Prostate gland (tissue), 2 donors: ENCODE measurements at regions of chrX and their contacts with region 1.

Region 1: GRCh38 chrX:49043220-49043986 is at the start of gene TFE3:
- DNase-seq: peak; percentile 97
- H3K4me3 ChIP-seq: peak within 1 kb of the TSS; percentile 63 to 73
- H3K27ac ChIP-seq: peak within 1 kb of the TSS; percentile 95 to 97
- H3K4me1 ChIP-seq: no peaks in the 10 kb centered on the region
- H3K27me3 ChIP-seq: no peaks in the 10 kb centered on the region
- CTCF ChIP-seq: peak in 3 of 4 experiments; percentile 60 to 89 (median 82)
- POLR2A ChIP-seq: peak; percentile 77
- total RNA-seq, gene TFE3: 44.6 to 88.4 TPM

Region 2: GRCh38 chrX:48917139-48918001 is 126.0 kb before region 1 on chrX:
- intact Hi-C with region 1: loop called (anchors 10 kb)
- DNase-seq: peak; percentile 85
- H3K4me3 ChIP-seq: peak overlapping the region; percentile 53 to 57
- H3K27ac ChIP-seq: peak overlapping the region; percentile 30 to 84
- H3K4me1 ChIP-seq: no peaks in the 10 kb centered on the region
- H3K27me3 ChIP-seq: no peaks in the 10 kb centered on the region
- CTCF ChIP-seq: peak; percentile 78 to 97 (median 96)
- POLR2A ChIP-seq: no peak

Region 3: GRCh38 chrX:48957827-48958634 is 85.4 kb before region 1 on chrX:
- intact Hi-C with region 1: loop called (anchors 1 kb)
- DNase-seq: peak; percentile 96
- H3K4me3 ChIP-seq: peak overlapping the region; percentile 52 to 53
- H3K27ac ChIP-seq: peak overlapping the region; percentile 93 to 95
- H3K4me1 ChIP-seq: no peaks in the 10 kb centered on the region
- H3K27me3 ChIP-seq: no peaks in the 10 kb centered on the region
- CTCF ChIP-seq: peak in 1 of 4 experiments; percentile 11
- POLR2A ChIP-seq: peak; percentile 47

Region 4: DNA sequence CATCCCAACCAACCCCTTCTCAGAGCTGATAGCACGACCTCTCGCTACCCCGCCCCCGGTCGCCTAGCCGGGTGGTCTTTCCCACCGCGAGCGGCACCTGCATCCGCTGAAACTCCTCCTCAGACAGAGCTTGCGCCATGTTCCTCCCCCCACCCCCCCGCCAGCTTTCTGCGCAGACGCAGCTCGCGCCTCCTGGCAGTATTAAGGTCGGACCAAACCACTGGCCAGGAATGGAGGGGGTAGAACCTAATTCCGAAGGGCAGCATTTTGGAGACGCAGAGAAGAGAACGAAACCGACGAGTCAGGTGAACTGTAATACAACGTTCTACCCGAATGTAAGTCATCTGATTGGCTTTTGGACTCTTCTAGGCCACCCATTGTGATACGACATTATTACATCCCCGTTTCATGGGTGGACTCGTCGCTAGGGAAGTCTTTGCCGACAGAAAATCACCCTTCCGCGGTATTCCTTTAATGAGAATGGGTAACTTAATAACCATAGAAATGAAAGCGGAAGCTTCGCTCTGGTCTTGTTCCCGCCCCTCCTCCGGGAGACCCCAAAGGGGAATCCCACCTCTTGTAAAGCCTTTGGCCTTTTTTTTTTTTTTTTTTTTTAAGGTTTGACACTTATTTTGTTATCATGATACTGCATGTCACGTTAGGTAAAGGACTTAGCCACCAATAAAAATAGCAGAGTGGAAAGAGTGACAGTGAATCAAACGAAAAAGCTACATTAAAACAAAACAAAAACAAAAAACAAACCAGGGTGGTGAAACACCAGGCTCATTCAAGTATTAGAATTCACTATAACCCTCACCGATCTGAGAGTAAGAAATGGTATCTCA is 41.1 kb before region 1 on chrX and contains the start of gene GRIPAP1:
- intact Hi-C with region 1: loop called (anchors 5 kb)
- DNase-seq: peak; percentile 46
- H3K4me3 ChIP-seq: peak within 1 kb of the TSS; percentile 54
- H3K27ac ChIP-seq: peak within 1 kb of the TSS; percentile 79 to 83
- H3K4me1 ChIP-seq: no peaks in the 10 kb centered on the region
- H3K27me3 ChIP-seq: no peaks in the 10 kb centered on the region
- CTCF ChIP-seq: no peak
- POLR2A ChIP-seq: peak; percentile 56
- total RNA-seq, gene GRIPAP1: 26.9 to 62.4 TPM